ENCODE measurements at regions of chr13 and their contacts with region 1.

Region 1: GRCh38 chr13:45119991-45120864 is at the start of gene GTF2F2:
- DNase-seq: peak; percentile 77 to 94 (median 82)
- ATAC-seq: peak; percentile 59
- H3K4me3 ChIP-seq: peak within 1 kb of the TSS; percentile 75
- H3K4me3 Mint-ChIP-seq: no peak within 1 kb of the TSS
- H3K27ac ChIP-seq: peak within 1 kb of the TSS; percentile 83 to 92
- H3K27ac Mint-ChIP-seq: no peak within 1 kb of the TSS
- H3K4me1 ChIP-seq: peaks cover 23% of the 10 kb centered on the region
- H3K4me1 Mint-ChIP-seq: peaks cover 12% of the 10 kb centered on the region
- H3K27me3 ChIP-seq: no peaks in the 10 kb centered on the region
- H3K27me3 Mint-ChIP-seq: no peaks in the 10 kb centered on the region
- CTCF ChIP-seq: no peak
- total RNA-seq, gene GTF2F2: 11.7 to 14.8 TPM

Region 2: GRCh38 chr13:44988973-44989817 is 131.0 kb before region 1 on chr13 and contains the starts of genes GPALPP1 and NUFIP1:
- CTCF ChIA-PET with region 1: no interaction called
- POLR2A ChIA-PET with region 1: no interaction called
- intact Hi-C with region 1: loop called in 1 of 2 experiments (anchors 2 kb)
- DNase-seq: peak; percentile 79 to 96 (median 89)
- ATAC-seq: peak; percentile 98
- H3K4me3 ChIP-seq: peak within 1 kb of the TSS; percentile 83
- H3K4me3 Mint-ChIP-seq: peak within 1 kb of the TSS; percentile 99
- H3K27ac ChIP-seq: peak within 1 kb of the TSS; percentile 75 to 87
- H3K27ac Mint-ChIP-seq: peak within 1 kb of the TSS; percentile 92
- H3K4me1 ChIP-seq: peaks cover 30% of the 10 kb centered on the region
- H3K4me1 Mint-ChIP-seq: peaks cover 65% of the 10 kb centered on the region
- H3K27me3 ChIP-seq: no peaks in the 10 kb centered on the region
- H3K27me3 Mint-ChIP-seq: no peaks in the 10 kb centered on the region
- CTCF ChIP-seq: no peak
- total RNA-seq, gene GPALPP1: 18.9 to 20.8 TPM
- total RNA-seq, gene NUFIP1: 4.3 to 4.4 TPM

Region 3: GRCh38 chr13:45297456-45298205 is 177.4 kb after region 1 on chr13:
- CTCF ChIA-PET with region 1: no interaction called
- POLR2A ChIA-PET with region 1: no interaction called
- intact Hi-C with region 1: loop called (anchors 5 to 10 kb)
- DNase-seq: peak in 4 of 14 experiments; percentile 8 to 54 (median 48)
- ATAC-seq: peak; percentile 86
- H3K4me3 ChIP-seq: no peak overlapping the region
- H3K4me3 Mint-ChIP-seq: peak overlapping the region; percentile 23
- H3K27ac ChIP-seq: peak overlapping the region; percentile 44 to 53
- H3K27ac Mint-ChIP-seq: peak overlapping the region; percentile 76
- H3K4me1 ChIP-seq: peaks cover 33% of the 10 kb centered on the region
- H3K4me1 Mint-ChIP-seq: peaks cover 44% of the 10 kb centered on the region
- H3K27me3 ChIP-seq: no peaks in the 10 kb centered on the region
- H3K27me3 Mint-ChIP-seq: peaks cover 2% of the 10 kb centered on the region
- CTCF ChIP-seq: no peak

Region 4: GRCh38 chr13:45464687-45465453 is 344.6 kb after region 1 on chr13 and contains the start of gene COG3:
- CTCF ChIA-PET with region 1: no interaction called
- POLR2A ChIA-PET with region 1: interaction called, 8 read pairs
- intact Hi-C with region 1: loop called in 1 of 2 experiments (anchors 5 kb)
- DNase-seq: peak; percentile 88 to 98 (median 93)
- ATAC-seq: peak; percentile 93
- H3K4me3 ChIP-seq: peak within 1 kb of the TSS; percentile 94
- H3K4me3 Mint-ChIP-seq: peak within 1 kb of the TSS; percentile 84
- H3K27ac ChIP-seq: peak within 1 kb of the TSS; percentile 78 to 97
- H3K27ac Mint-ChIP-seq: peak within 1 kb of the TSS; percentile 85
- H3K4me1 ChIP-seq: peaks cover 30% of the 10 kb centered on the region
- H3K4me1 Mint-ChIP-seq: peaks cover 60% of the 10 kb centered on the region
- H3K27me3 ChIP-seq: no peaks in the 10 kb centered on the region
- H3K27me3 Mint-ChIP-seq: no peaks in the 10 kb centered on the region
- CTCF ChIP-seq: peak; percentile 50
- total RNA-seq, gene COG3: 52.8 to 57.0 TPM